Left ventricle myocardium inferior (tissue), 1 donor: ENCODE measurements at regions of chr12 and their contacts with region 1.

Region 1: GRCh38 chr12:66269757-66270383 is 32.4 kb upstream of the HELB start:
- DNase-seq: no peak
- H3K4me3 ChIP-seq: no peak overlapping the region
- H3K27ac ChIP-seq: no peak overlapping the region
- H3K4me1 ChIP-seq: no peaks in the 10 kb centered on the region
- H3K27me3 ChIP-seq: peaks cover 11% of the 10 kb centered on the region
- CTCF ChIP-seq: peak; percentile 65

Region 2: DNA sequence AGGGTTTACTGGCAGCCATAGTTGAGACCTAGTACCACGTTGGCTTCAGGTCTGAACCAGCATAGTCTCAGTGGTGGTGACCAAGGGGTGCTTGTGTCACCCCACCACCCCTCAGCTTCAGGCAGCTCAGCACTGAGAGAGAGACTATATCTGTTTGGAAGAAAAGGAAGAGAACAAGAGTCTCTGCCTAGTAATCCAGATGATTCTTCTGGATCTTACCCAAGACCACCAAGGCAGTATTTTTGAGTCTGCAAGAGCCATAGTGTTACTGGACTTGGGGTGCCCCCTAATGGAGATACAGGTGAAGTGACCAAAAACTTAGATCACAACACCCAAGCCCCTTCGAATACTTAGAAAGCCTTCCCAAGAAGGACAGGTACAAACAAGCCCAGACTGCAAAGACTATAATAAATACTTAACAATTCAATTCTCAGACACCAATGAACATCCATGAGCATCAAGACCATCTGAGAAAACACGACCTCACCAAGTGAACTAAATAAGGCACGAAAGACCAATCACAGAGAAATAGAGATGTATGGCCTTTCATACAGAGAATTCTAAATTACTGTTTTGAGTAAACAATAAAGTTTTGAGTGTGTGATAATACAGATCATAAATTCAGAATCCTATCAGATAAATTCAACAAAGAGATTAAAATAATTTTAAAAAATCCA is 139.5 kb after region 1 on chr12:
- intact Hi-C with region 1: loop called (anchors 10 kb)
- DNase-seq: no peak
- H3K4me3 ChIP-seq: no peak overlapping the region
- H3K27ac ChIP-seq: no peak overlapping the region
- H3K4me1 ChIP-seq: no peaks in the 10 kb centered on the region
- H3K27me3 ChIP-seq: no peaks in the 10 kb centered on the region
- CTCF ChIP-seq: peak; percentile 77